ENCODE measurements at regions of chr18 and their contacts with region 1.

Region 1: GRCh38 chr18:4854671-4855070 is 342.4 kb downstream of the AKAIN1 start:
- DNase-seq: no peak
- ATAC-seq: no peak
- H3K4me3 ChIP-seq: no peak overlapping the region
- H3K27ac ChIP-seq: no peak overlapping the region
- H3K4me1 ChIP-seq: no peaks in the 10 kb centered on the region
- H3K27me3 ChIP-seq: no peaks in the 10 kb centered on the region
- CTCF ChIP-seq: no peak
- POLR2A ChIP-seq: no peak

Region 2: GRCh38 chr18:4789506-4789905 is 65.2 kb before region 1 on chr18:
- in situ Hi-C with region 1: no loop called
- intact Hi-C with region 1: no loop called
- DNase-seq: no peak
- ATAC-seq: no peak
- H3K4me3 ChIP-seq: no peak overlapping the region
- H3K27ac ChIP-seq: no peak overlapping the region
- H3K4me1 ChIP-seq: no peaks in the 10 kb centered on the region
- H3K27me3 ChIP-seq: no peaks in the 10 kb centered on the region
- CTCF ChIP-seq: no peak
- POLR2A ChIP-seq: no peak

Region 3: DNA sequence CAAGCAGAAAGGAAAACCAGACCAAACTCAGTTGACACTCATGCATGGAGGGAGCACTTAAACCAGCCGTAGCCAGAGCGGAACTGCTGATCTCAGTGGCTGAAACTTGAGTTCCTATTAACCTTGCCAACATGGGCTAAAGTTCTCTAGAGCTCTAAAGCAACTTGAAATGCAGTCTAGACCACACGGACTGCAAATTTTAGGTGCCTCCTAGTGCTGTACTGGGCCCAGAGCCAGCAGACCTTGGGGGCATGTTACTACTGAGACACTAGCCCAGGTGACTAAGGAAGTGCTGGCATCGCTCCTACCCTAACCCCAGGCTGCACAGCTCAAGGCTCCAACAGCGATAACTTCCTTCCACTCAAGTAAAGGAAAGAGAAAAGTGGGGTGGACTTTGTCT is 105.9 kb after region 1 on chr18:
- in situ Hi-C with region 1: loop called in 1 of 4 experiments (anchors 25 kb)
- intact Hi-C with region 1: no loop called
- DNase-seq: no peak
- ATAC-seq: no peak
- H3K4me3 ChIP-seq: no peak overlapping the region
- H3K27ac ChIP-seq: no peak overlapping the region
- H3K4me1 ChIP-seq: no peaks in the 10 kb centered on the region
- H3K27me3 ChIP-seq: no peaks in the 10 kb centered on the region
- CTCF ChIP-seq: no peak
- POLR2A ChIP-seq: no peak

Measured in gastrocnemius medialis (tissue), 4 donors.